ENCODE measurements at regions of chr5 and their contacts with region 1.

Region 1: DNA sequence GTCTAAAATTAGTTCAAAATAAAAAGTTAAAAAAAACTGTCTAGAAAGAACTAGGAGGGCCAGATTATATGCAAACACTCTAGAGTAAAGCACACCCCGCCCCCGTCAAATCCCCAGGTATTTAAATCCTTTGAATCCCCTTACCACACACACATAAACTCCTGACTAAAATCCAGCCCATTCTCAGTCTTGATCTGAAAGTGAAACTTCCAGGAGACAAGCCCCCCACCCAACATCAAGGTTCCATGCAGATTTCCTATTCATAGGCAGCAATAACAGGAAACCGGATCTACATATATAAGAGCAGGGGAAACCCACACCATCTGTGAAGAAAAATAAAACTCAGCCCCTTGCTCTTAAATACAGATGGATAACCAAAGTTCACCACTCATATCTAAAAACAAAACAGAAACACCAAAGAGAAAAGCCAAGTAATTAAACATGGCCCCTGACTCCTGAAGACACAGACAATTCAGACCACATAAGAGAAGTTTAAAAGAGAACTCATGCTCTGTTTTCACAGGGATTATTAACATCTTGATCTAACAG is 42.3 kb downstream of the MARCHF3 start:
- DNase-seq: peak; percentile 50
- H3K4me3 Mint-ChIP-seq: peak overlapping the region; percentile 31
- H3K27ac Mint-ChIP-seq: peak overlapping the region; percentile 76
- H3K4me1 Mint-ChIP-seq: peaks cover 22% of the 10 kb centered on the region
- H3K27me3 Mint-ChIP-seq: no peaks in the 10 kb centered on the region

Region 2: GRCh38 chr5:126972062-126972895 is 15.8 kb before region 1 on chr5:
- CTCF ChIA-PET with region 1: no interaction called
- POLR2A ChIA-PET with region 1: no interaction called
- intact Hi-C with region 1: loop called (anchors 1 kb)
- DNase-seq: peak; percentile 26
- H3K4me3 Mint-ChIP-seq: peak overlapping the region; percentile 47
- H3K27ac Mint-ChIP-seq: peak overlapping the region; percentile 78
- H3K4me1 Mint-ChIP-seq: peaks cover 24% of the 10 kb centered on the region
- H3K27me3 Mint-ChIP-seq: no peaks in the 10 kb centered on the region

Region 3: GRCh38 chr5:127011961-127012644 is 24.0 kb after region 1 on chr5:
- CTCF ChIA-PET with region 1: no interaction called
- POLR2A ChIA-PET with region 1: no interaction called
- intact Hi-C with region 1: loop called (anchors 1 kb)
- DNase-seq: no peak
- H3K4me3 Mint-ChIP-seq: no peak overlapping the region
- H3K27ac Mint-ChIP-seq: no peak overlapping the region
- H3K4me1 Mint-ChIP-seq: peaks cover 30% of the 10 kb centered on the region
- H3K27me3 Mint-ChIP-seq: peaks cover 1% of the 10 kb centered on the region